Endothelial cell of umbilical vein (primary cell): ENCODE measurements at regions of chr12 and their contacts with region 1.

Region 1: DNA sequence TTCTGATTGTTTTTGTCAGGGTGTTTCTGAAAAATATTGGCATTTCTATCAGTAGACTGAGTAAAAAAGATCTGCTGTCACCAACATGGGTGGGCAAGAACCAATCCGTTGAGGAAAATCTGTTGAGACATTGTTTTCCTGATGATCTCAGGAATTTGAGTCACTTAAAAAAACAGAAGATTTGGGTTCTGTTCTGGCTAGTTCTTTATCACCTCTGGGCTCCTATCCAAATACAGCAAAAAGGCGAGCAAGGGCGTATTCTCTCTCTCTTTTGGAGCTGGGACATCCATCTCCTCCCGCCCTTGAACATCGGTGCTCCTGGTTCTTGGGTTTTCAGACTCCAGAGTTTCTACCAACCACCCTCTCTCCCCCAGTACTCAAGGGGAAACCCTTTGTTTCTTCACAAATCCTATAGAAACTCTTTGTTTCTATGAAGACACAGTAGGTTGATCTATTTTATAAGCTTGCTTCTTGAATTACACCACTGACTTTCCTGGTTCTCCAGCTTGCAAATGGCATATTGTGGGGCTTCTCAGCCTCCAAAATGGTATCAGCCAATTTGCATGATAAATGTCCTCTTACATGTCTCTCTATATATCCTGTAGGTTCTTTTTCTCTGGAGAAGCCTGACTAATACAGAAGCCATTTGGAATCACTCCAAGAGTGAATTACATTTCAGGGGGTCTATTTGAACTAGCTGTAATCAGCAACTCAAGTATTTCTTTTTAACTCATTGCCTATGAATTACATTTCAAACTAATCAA is 263.9 kb upstream of the TMTC1 start:
- DNase-seq: peak; percentile 79
- H3K4me3 ChIP-seq: peak overlapping the region in 1 of 3 experiments; percentile 38
- H3K27ac ChIP-seq: peak overlapping the region; percentile 71
- H3K4me1 ChIP-seq: peaks cover 40% of the 10 kb centered on the region
- H3K27me3 ChIP-seq: no peaks in the 10 kb centered on the region
- CTCF ChIP-seq: no peak
- POLR2A ChIP-seq: peak; percentile 32

Region 2: GRCh38 chr12:29691141-29691854 is 356.4 kb before region 1 on chr12:
- CTCF ChIA-PET with region 1: no interaction called
- POLR2A ChIA-PET with region 1: no interaction called
- dilution Hi-C with region 1: no loop called
- intact Hi-C with region 1: no loop called
- DNase-seq: no peak
- H3K4me3 ChIP-seq: no peak overlapping the region
- H3K27ac ChIP-seq: no peak overlapping the region
- H3K4me1 ChIP-seq: no peaks in the 10 kb centered on the region
- H3K27me3 ChIP-seq: no peaks in the 10 kb centered on the region
- CTCF ChIP-seq: no peak
- POLR2A ChIP-seq: no peak

Region 3: DNA sequence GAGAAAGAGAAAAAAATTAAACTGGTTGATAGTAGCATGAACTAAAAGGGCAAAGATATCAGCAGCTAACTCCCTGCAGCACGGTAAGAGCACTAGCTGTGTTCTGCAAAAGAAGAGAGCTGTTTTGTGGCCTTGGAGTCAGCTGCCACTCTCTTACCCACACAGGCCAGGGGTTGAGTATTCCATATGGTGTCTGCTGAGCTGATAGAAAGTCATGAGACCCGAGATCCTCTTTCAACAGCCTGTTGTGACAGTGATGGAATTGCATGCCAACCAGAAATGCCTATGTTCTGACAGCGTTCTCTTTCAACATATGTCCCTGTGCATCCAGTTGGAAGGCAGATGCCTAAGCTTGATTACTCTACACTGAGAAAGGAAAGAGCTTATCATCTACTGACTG is 303.9 kb before region 1 on chr12:
- CTCF ChIA-PET with region 1: no interaction called
- POLR2A ChIA-PET with region 1: no interaction called
- dilution Hi-C with region 1: no loop called
- intact Hi-C with region 1: loop called (anchors 5 kb)
- DNase-seq: peak; percentile 39
- H3K4me3 ChIP-seq: no peak overlapping the region
- H3K27ac ChIP-seq: no peak overlapping the region
- H3K4me1 ChIP-seq: peaks cover 19% of the 10 kb centered on the region
- H3K27me3 ChIP-seq: no peaks in the 10 kb centered on the region
- CTCF ChIP-seq: no peak
- POLR2A ChIP-seq: no peak

Region 4: DNA sequence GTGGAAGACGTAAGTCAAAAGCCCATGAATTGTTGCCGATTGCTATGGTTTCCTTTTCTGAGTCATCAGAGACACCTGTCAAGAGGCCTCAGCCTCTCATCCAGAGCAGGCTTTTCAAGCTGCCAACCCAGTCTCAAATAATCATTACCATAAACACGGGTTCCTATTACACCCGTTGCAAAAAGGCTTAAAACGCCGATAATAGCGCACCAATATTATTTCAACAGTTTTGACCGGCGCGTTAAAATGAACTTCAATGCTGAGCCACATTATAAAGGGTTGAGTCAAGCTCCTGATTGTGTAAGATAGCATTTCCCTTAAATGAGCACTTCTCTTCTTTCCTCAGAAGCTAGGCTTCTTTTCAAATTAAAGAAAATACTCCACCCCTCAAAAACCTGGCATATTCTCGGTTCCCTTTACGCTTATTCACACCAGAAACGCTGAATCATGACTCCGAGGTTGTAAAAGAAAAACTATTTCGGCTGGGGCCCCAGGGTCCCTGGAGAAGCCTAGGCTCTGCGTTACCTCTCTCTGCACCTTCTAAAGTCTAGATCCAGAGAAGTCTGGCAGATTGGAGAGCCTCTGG is 265.3 kb before region 1 on chr12:
- CTCF ChIA-PET with region 1: no interaction called
- POLR2A ChIA-PET with region 1: no interaction called
- dilution Hi-C with region 1: no loop called
- intact Hi-C with region 1: loop called (anchors 5 kb)
- DNase-seq: peak; percentile 63
- H3K4me3 ChIP-seq: peak overlapping the region; percentile 32 to 71 (median 60)
- H3K27ac ChIP-seq: no peak overlapping the region
- H3K4me1 ChIP-seq: peaks cover 16% of the 10 kb centered on the region
- H3K27me3 ChIP-seq: peaks cover 4 to 15% of the 10 kb centered on the region in 2 experiments
- CTCF ChIP-seq: no peak
- POLR2A ChIP-seq: no peak

Region 5: GRCh38 chr12:29921307-29921706 is 126.4 kb before region 1 on chr12:
- CTCF ChIA-PET with region 1: no interaction called
- POLR2A ChIA-PET with region 1: no interaction called
- dilution Hi-C with region 1: no loop called
- intact Hi-C with region 1: loop called (anchors 5 kb)
- DNase-seq: peak; percentile 84
- H3K4me3 ChIP-seq: no peak overlapping the region
- H3K27ac ChIP-seq: peak overlapping the region; percentile 13
- H3K4me1 ChIP-seq: peaks cover 11% of the 10 kb centered on the region
- H3K27me3 ChIP-seq: no peaks in the 10 kb centered on the region
- CTCF ChIP-seq: no peak
- POLR2A ChIP-seq: no peak

Region 6: GRCh38 chr12:29957835-29958234 is 89.8 kb before region 1 on chr12:
- CTCF ChIA-PET with region 1: no interaction called
- POLR2A ChIA-PET with region 1: no interaction called
- dilution Hi-C with region 1: no loop called
- intact Hi-C with region 1: no loop called
- DNase-seq: peak; percentile 12
- H3K4me3 ChIP-seq: no peak overlapping the region
- H3K27ac ChIP-seq: no peak overlapping the region
- H3K4me1 ChIP-seq: no peaks in the 10 kb centered on the region
- H3K27me3 ChIP-seq: no peaks in the 10 kb centered on the region
- CTCF ChIP-seq: no peak
- POLR2A ChIP-seq: no peak

Region 7: DNA sequence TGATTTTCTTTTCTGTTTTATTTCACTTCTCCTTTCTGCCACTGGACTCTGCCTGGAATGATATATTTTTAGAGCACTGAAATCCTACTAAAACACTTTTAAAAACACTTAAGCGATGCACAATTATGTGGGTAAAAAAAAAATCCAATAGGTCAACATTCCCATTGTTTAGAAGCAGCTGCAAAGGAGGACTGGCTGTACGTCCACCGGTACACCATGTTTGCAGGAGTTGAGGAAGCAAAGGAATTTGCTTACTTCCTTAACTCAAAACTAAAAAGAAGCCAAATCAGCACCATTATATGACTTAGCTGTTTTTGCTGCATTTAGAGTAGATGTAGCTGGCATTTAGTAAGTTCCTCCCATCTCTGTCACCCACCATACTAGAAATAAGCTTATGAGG is 77.2 kb before region 1 on chr12:
- CTCF ChIA-PET with region 1: interaction called, 7 read pairs
- POLR2A ChIA-PET with region 1: no interaction called
- dilution Hi-C with region 1: no loop called
- intact Hi-C with region 1: loop called (anchors 2 kb)
- DNase-seq: peak; percentile 90
- H3K4me3 ChIP-seq: no peak overlapping the region
- H3K27ac ChIP-seq: peak overlapping the region; percentile 79
- H3K4me1 ChIP-seq: peaks cover 21% of the 10 kb centered on the region
- H3K27me3 ChIP-seq: no peaks in the 10 kb centered on the region
- CTCF ChIP-seq: no peak
- POLR2A ChIP-seq: no peak

Region 8: DNA sequence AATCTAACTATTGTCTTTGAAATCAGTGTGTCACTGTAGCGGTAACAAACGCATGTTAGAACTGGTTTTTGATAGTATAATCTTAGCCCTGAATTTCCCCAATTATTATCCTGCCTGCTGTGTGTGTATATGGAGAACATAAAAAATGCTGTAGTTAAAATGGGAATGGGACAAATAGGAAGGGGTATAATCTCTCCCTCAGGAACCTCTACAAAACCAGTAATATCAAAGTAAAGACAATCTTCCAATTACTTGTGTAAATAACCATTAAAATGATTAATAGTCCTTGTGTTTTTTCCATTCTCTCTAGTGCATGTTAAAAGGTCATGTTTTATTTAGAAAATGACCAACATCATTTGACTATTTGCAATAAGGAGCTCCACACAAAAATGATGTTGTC is 63.8 kb before region 1 on chr12:
- CTCF ChIA-PET with region 1: no interaction called
- POLR2A ChIA-PET with region 1: no interaction called
- dilution Hi-C with region 1: no loop called
- intact Hi-C with region 1: no loop called
- DNase-seq: peak; percentile 46
- H3K4me3 ChIP-seq: no peak overlapping the region
- H3K27ac ChIP-seq: no peak overlapping the region
- H3K4me1 ChIP-seq: no peaks in the 10 kb centered on the region
- H3K27me3 ChIP-seq: no peaks in the 10 kb centered on the region
- CTCF ChIP-seq: no peak
- POLR2A ChIP-seq: no peak

Region 9: DNA sequence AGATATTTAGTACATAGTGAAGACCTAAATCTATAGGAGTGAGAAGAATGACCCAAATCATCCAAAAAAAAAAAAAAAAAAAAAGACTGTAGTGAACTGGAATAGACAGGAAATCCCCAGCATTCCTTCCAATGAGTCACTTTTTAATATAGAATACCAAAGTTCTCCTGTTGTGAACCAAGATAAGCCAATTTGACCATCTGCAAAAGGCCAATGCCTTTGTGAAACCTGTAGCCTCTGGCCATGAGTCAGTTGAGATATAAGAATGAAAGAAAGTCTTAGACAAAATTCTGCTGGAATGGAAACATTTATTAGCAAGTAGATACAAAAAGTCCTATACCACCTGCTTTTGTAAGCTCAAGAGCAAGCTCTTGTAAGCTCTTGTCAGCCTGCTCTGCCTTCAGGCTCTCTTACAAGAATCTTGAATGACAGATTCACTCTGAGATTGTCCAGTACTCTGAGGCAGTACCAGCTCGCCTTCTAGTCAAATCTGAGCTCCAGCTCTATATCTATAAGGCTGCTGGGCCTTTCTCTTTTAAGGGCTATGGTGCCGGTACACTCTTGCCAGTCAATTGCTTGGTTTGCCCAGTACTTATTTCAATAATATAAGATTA is 21.0 kb before region 1 on chr12:
- CTCF ChIA-PET with region 1: interaction called, 5 read pairs
- POLR2A ChIA-PET with region 1: interaction called, 3 read pairs
- dilution Hi-C with region 1: no loop called
- intact Hi-C with region 1: loop called (anchors 1 kb)
- DNase-seq: peak; percentile 95
- H3K4me3 ChIP-seq: no peak overlapping the region
- H3K27ac ChIP-seq: peak overlapping the region; percentile 79
- H3K4me1 ChIP-seq: peaks cover 25% of the 10 kb centered on the region
- H3K27me3 ChIP-seq: no peaks in the 10 kb centered on the region
- CTCF ChIP-seq: no peak
- POLR2A ChIP-seq: peak; percentile 61